ENCODE measurements at regions of chr5 and their contacts with region 1.

Region 1: GRCh38 chr5:7010576-7010975 is 297.3 kb downstream of the TENT4A start:
- DNase-seq: peak in 1 of 2 experiments; percentile 31
- H3K4me3 ChIP-seq: no peak overlapping the region
- H3K27ac ChIP-seq: no peak overlapping the region
- H3K4me1 ChIP-seq: no peaks in the 10 kb centered on the region
- H3K27me3 ChIP-seq: no peaks in the 10 kb centered on the region
- CTCF ChIP-seq: no peak

Region 2: GRCh38 chr5:6525910-6526309 is 484.7 kb before region 1 on chr5:
- CTCF ChIA-PET with region 1: interaction called, 11 read pairs
- POLR2A ChIA-PET with region 1: no interaction called
- intact Hi-C with region 1: no loop called
- DNase-seq: peak in 1 of 2 experiments; percentile 29
- H3K4me3 ChIP-seq: no peak overlapping the region
- H3K27ac ChIP-seq: no peak overlapping the region
- H3K4me1 ChIP-seq: 0 out of 2 replicates have a peak, but pooled peaks cover 9% of the 10 kb centered on the region
- H3K27me3 ChIP-seq: peaks cover 95% of the 10 kb centered on the region
- CTCF ChIP-seq: peak; percentile 65

Region 3: DNA sequence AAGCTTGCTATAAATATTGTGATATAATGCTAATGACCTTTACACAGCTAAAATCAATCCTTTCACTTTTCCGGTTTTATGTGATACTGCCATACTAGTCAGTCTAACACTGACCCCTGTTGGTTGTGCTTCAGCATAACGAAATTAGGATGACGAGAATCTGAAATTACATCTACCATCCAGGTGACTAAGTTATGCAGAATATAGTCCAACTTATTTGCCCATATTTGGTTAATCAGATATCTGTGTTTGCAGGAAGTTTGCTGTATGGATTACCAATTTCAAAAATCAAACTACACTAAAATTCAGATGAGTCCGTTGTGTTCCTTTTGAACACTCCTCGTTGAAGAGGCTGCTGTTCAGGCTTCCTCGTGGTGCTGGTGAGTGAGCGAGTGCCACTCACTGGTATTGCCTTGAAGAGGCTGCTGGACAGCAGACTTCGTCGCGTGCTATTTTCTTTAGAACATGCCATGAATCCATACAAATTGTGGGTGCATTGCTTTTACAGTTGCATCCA is 264.8 kb before region 1 on chr5:
- CTCF ChIA-PET with region 1: no interaction called
- POLR2A ChIA-PET with region 1: interaction called, 12 read pairs
- intact Hi-C with region 1: no loop called
- DNase-seq: peak in 1 of 2 experiments; percentile 67
- H3K4me3 ChIP-seq: no peak overlapping the region
- H3K27ac ChIP-seq: no peak overlapping the region
- H3K4me1 ChIP-seq: peaks cover 5% of the 10 kb centered on the region
- H3K27me3 ChIP-seq: no peaks in the 10 kb centered on the region
- CTCF ChIP-seq: peak; percentile 88

Region 4: GRCh38 chr5:6765612-6766525 is 244.7 kb before region 1 on chr5:
- CTCF ChIA-PET with region 1: no interaction called
- POLR2A ChIA-PET with region 1: no interaction called
- intact Hi-C with region 1: no loop called
- DNase-seq: peak; percentile 68 to 95
- H3K4me3 ChIP-seq: no peak overlapping the region; the same call in 1 of the 2 replicates
- H3K27ac ChIP-seq: peak overlapping the region; percentile 53
- H3K4me1 ChIP-seq: peaks cover 29% of the 10 kb centered on the region
- H3K27me3 ChIP-seq: no peaks in the 10 kb centered on the region
- CTCF ChIP-seq: peak; percentile 99

Region 5: DNA sequence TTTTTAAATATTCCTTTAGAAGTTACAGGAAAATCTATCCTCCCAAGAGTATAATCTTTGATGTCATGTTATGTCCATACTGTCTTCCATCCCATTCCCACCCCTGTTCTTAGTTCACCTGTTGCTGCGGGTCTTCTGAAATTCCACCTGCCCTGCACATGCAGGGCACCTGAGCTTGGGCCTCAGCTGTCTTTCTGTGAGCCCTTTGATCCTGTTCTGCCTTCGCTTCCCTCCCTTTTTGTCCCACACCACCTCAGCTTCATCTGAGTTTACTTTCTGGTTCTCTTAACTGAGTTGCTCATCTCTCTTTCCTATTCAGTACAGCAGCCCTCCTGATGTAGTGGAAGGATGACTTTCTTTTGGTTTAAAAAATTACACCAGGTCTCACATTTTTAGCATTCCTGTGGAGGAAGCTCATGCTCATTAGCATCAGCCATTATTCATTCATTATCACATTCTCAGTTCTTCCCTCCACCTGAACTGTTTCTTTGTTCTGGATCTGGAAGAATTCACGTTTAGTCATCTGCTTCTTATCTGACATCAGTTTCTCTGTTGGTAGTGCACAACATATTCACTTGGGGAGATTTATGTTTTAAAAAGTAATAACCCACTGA is 596.4 kb after region 1 on chr5:
- CTCF ChIA-PET with region 1: no interaction called
- POLR2A ChIA-PET with region 1: no interaction called
- intact Hi-C with region 1: no loop called
- DNase-seq: no peak
- H3K4me3 ChIP-seq: no peak overlapping the region
- H3K27ac ChIP-seq: no peak overlapping the region
- H3K4me1 ChIP-seq: no peaks in the 10 kb centered on the region
- H3K27me3 ChIP-seq: peaks cover 15% of the 10 kb centered on the region; the same call in 1 of the 2 replicates
- CTCF ChIP-seq: no peak